ENCODE measurements at regions of chr12 and their contacts with region 1.

Region 1: GRCh38 chr12:76083904-76084862 is at the start of gene NAP1L1:
- DNase-seq: peak; percentile 96
- ATAC-seq: peak; percentile 81
- H3K4me3 Mint-ChIP-seq: peak within 1 kb of the TSS; percentile 99
- H3K27ac Mint-ChIP-seq: peak within 1 kb of the TSS; percentile 100
- H3K4me1 Mint-ChIP-seq: peaks cover 60% of the 10 kb centered on the region
- H3K27me3 Mint-ChIP-seq: no peaks in the 10 kb centered on the region
- CTCF ChIP-seq: no peak
- total RNA-seq, gene NAP1L1: 1,180 and 1,185 TPM in 2 replicates

Region 2: GRCh38 chr12:74537707-74538385 is 1546.3 kb before region 1 on chr12 and contains the start of gene ATXN7L3B:
- CTCF ChIA-PET with region 1: no interaction called
- POLR2A ChIA-PET with region 1: no interaction called
- intact Hi-C with region 1: loop called (anchors 5 kb)
- DNase-seq: peak; percentile 95
- ATAC-seq: peak; percentile 94
- H3K4me3 Mint-ChIP-seq: peak within 1 kb of the TSS; percentile 95
- H3K27ac Mint-ChIP-seq: peak within 1 kb of the TSS; percentile 98
- H3K4me1 Mint-ChIP-seq: peaks cover 63% of the 10 kb centered on the region
- H3K27me3 Mint-ChIP-seq: no peaks in the 10 kb centered on the region
- CTCF ChIP-seq: no peak
- total RNA-seq, gene ATXN7L3B: 29.2 and 30.7 TPM in 2 replicates

Region 3: DNA sequence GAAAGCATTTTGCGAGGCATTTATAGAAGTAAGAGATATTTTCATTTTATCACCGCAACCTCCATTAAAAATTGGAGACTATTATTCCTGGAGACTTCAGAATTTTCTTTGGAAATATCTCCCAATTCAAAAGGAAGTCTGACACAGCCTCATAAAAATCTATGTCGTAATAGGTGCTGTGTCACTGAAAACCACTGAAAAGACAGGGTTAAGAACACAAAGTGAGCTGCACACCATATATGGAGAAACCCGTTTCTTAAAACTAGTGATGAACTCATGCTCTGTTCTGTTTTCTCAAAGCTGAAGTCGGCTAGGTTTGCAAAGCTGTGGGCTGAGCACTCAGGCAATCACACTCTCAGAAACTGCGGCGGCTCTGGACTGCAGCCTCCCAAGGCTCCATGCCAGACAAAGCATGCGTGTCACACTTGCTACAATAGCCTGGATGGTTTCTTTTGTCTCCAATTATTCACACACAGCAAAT is 603.7 kb before region 1 on chr12 and contains the start of gene GLIPR1:
- CTCF ChIA-PET with region 1: interaction called, 3 read pairs
- POLR2A ChIA-PET with region 1: interaction called, 3 read pairs
- intact Hi-C with region 1: loop called (anchors 1 kb)
- DNase-seq: peak; percentile 40
- ATAC-seq: peak; percentile 79
- H3K4me3 Mint-ChIP-seq: peak within 1 kb of the TSS; percentile 96
- H3K27ac Mint-ChIP-seq: peak within 1 kb of the TSS; percentile 97
- H3K4me1 Mint-ChIP-seq: peaks cover 96% of the 10 kb centered on the region
- H3K27me3 Mint-ChIP-seq: no peaks in the 10 kb centered on the region
- CTCF ChIP-seq: no peak
- total RNA-seq, gene GLIPR1: 44.7 and 45.4 TPM in 2 replicates

Region 4: GRCh38 chr12:76031537-76032073 is 52.6 kb before region 1 on chr12 and contains the start of gene PHLDA1:
- CTCF ChIA-PET with region 1: no interaction called
- POLR2A ChIA-PET with region 1: interaction called, 10 read pairs
- intact Hi-C with region 1: loop called (anchors 1 kb)
- DNase-seq: peak; percentile 84
- ATAC-seq: peak; percentile 85
- H3K4me3 Mint-ChIP-seq: peak within 1 kb of the TSS; percentile 89
- H3K27ac Mint-ChIP-seq: peak within 1 kb of the TSS; percentile 84
- H3K4me1 Mint-ChIP-seq: peaks cover 22% of the 10 kb centered on the region
- H3K27me3 Mint-ChIP-seq: peaks cover 17% of the 10 kb centered on the region
- CTCF ChIP-seq: no peak
- total RNA-seq, gene PHLDA1: 0.83 and 1.1 TPM in 2 replicates

Region 5: GRCh38 chr12:76176940-76177339 is 92.8 kb after region 1 on chr12:
- CTCF ChIA-PET with region 1: no interaction called
- POLR2A ChIA-PET with region 1: interaction called, 5 read pairs
- intact Hi-C with region 1: loop called (anchors 5 kb)
- DNase-seq: no peak
- ATAC-seq: no peak
- H3K4me3 Mint-ChIP-seq: no peak overlapping the region
- H3K27ac Mint-ChIP-seq: no peak overlapping the region
- H3K4me1 Mint-ChIP-seq: peaks cover 21% of the 10 kb centered on the region
- H3K27me3 Mint-ChIP-seq: no peaks in the 10 kb centered on the region
- CTCF ChIP-seq: no peak

Region 6: GRCh38 chr12:76508178-76508577 is 424.0 kb after region 1 on chr12:
- CTCF ChIA-PET with region 1: interaction called, 3 read pairs
- POLR2A ChIA-PET with region 1: no interaction called
- intact Hi-C with region 1: loop called (anchors 1 kb)
- DNase-seq: no peak
- ATAC-seq: no peak
- H3K4me3 Mint-ChIP-seq: no peak overlapping the region
- H3K27ac Mint-ChIP-seq: no peak overlapping the region
- H3K4me1 Mint-ChIP-seq: peaks cover 48% of the 10 kb centered on the region
- H3K27me3 Mint-ChIP-seq: no peaks in the 10 kb centered on the region
- CTCF ChIP-seq: no peak

Region 7: GRCh38 chr12:76763743-76764675 is 679.8 kb after region 1 on chr12 and contains the start of gene ZDHHC17:
- CTCF ChIA-PET with region 1: no interaction called
- POLR2A ChIA-PET with region 1: interaction called, 8 read pairs
- intact Hi-C with region 1: loop called (anchors 1 kb)
- DNase-seq: peak; percentile 96
- ATAC-seq: peak; percentile 87
- H3K4me3 Mint-ChIP-seq: peak within 1 kb of the TSS; percentile 97
- H3K27ac Mint-ChIP-seq: peak within 1 kb of the TSS; percentile 96
- H3K4me1 Mint-ChIP-seq: peaks cover 44% of the 10 kb centered on the region
- H3K27me3 Mint-ChIP-seq: no peaks in the 10 kb centered on the region
- CTCF ChIP-seq: no peak
- total RNA-seq, gene ZDHHC17: 51.8 and 70.8 TPM in 2 replicates

Measured in activated B cell treated with CpG ODN at 0.5 μM for 24 hours (primary cell).